Spleen (tissue), 13 donors: ENCODE measurements at regions of chr7 and their contacts with region 1.

Region 1: DNA sequence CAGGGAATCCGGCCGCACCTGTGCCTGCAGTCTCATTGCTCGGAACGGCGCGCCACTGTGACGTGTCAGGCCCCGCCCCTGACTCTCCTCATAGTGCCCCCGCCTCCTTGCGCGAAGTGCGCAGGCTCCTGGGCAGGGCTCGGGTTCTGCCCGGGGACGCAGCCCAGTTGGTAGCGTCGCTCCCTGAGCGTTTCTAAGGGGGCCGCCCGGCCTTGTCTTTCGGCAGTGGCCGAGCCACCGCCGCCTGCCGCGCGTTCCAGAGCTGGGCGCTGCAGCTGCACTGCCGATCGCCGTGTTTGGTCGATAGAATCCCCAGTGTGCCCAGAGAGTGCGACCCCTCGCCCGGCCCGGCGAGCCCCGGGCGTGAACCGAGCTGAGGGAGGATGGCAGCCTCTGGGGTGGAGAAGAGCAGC is at the start of gene KLHL7:
- DNase-seq: peak; percentile 100
- H3K4me3 ChIP-seq: peak within 1 kb of the TSS; percentile 72 to 96 (median 84)
- H3K27ac ChIP-seq: peak within 1 kb of the TSS; percentile 90 to 96 (median 95)
- H3K4me1 ChIP-seq: peaks cover 14 to 48% (median 40%) of the 10 kb centered on the region in 6 donors
- H3K27me3 ChIP-seq: no peaks in the 10 kb centered on the region
- CTCF ChIP-seq: peak in 2 of 11 experiments; percentile 19 to 29
- POLR2A ChIP-seq: peak; percentile 66 to 90 (median 87)
- total RNA-seq, gene KLHL7: 17.5 to 31.6 (median 23.5) TPM

Region 2: GRCh38 chr7:23181684-23182553 is 76.3 kb after region 1 on chr7 and contains the start of gene NUP42:
- intact Hi-C with region 1: loop called (anchors 5 kb)
- DNase-seq: peak; percentile 98
- H3K4me3 ChIP-seq: peak within 1 kb of the TSS; percentile 72 to 96 (median 88)
- H3K27ac ChIP-seq: peak within 1 kb of the TSS; percentile 90 to 96 (median 94)
- H3K4me1 ChIP-seq: peaks cover 17 to 56% (median 40%) of the 10 kb centered on the region in 6 donors
- H3K27me3 ChIP-seq: no peaks in the 10 kb centered on the region
- CTCF ChIP-seq: peak in 4 of 11 experiments; percentile 8 to 37 (median 13)
- POLR2A ChIP-seq: peak; percentile 41 to 79 (median 42)
- total RNA-seq, gene NUP42: 37.1 to 51.9 (median 43.9) TPM